ENCODE measurements at regions of chr10 and their contacts with region 1.

Region 1: DNA sequence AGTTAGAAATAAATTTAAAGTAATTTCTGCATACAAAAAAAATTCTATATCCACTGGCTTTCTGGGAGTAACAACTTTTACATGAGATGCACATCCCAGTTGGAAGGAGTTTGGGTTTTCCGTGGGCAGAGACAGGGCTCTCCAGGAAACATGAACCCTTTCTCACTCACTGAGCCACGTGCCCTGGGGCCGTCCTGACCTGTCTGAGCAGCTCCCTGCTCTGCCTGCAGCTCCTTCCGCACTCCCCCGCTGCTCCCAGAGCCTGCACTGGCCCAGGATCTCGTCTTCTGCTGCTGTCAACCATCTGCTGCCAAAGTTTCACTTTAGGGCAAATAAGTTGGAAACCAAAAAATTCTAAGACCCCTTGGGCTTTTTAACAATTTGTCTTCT is 169.1 kb downstream of the DIP2C start:
- DNase-seq: peak; percentile 39
- H3K4me3 ChIP-seq: no peak overlapping the region
- H3K27ac ChIP-seq: no peak overlapping the region
- H3K4me1 ChIP-seq: no peaks in the 10 kb centered on the region
- H3K27me3 ChIP-seq: no peaks in the 10 kb centered on the region
- CTCF ChIP-seq: no peak
- POLR2A ChIP-seq: no peak

Region 2: GRCh38 chr10:772227-772637 is 251.8 kb after region 1 on chr10:
- intact Hi-C with region 1: no loop called
- DNase-seq: no peak
- H3K4me3 ChIP-seq: no peak overlapping the region
- H3K27ac ChIP-seq: no peak overlapping the region
- H3K4me1 ChIP-seq: no peaks in the 10 kb centered on the region
- H3K27me3 ChIP-seq: no peaks in the 10 kb centered on the region
- CTCF ChIP-seq: no peak
- POLR2A ChIP-seq: no peak

Region 3: DNA sequence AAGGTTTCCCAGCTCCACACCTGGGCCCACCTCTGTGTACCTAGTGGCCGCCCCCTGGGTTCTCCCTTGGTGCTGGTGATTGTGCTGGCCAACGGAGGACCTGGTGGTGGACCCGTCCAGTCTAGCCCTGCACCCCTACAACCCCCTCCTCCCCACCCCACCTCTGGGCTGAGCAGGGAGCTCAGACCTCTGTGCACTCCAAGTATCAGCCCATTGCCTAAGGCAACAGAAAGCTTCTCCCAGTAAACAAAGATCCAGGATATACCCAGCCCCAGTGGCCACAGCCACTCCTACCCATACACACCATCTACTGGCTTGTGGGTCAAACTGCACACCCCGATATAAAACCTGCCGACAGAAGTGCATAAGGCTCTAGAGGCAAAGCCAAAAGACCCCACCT is 274.1 kb after region 1 on chr10:
- intact Hi-C with region 1: loop called (anchors 5 kb)
- DNase-seq: no peak
- H3K4me3 ChIP-seq: no peak overlapping the region
- H3K27ac ChIP-seq: no peak overlapping the region
- H3K4me1 ChIP-seq: peaks cover 5% of the 10 kb centered on the region
- H3K27me3 ChIP-seq: no peaks in the 10 kb centered on the region
- CTCF ChIP-seq: no peak
- POLR2A ChIP-seq: no peak

Measured in testis (tissue), 5 donors.